OCI-LY7 (cell line): ENCODE measurements at regions of chr1 and their contacts with region 1.

Region 1: DNA sequence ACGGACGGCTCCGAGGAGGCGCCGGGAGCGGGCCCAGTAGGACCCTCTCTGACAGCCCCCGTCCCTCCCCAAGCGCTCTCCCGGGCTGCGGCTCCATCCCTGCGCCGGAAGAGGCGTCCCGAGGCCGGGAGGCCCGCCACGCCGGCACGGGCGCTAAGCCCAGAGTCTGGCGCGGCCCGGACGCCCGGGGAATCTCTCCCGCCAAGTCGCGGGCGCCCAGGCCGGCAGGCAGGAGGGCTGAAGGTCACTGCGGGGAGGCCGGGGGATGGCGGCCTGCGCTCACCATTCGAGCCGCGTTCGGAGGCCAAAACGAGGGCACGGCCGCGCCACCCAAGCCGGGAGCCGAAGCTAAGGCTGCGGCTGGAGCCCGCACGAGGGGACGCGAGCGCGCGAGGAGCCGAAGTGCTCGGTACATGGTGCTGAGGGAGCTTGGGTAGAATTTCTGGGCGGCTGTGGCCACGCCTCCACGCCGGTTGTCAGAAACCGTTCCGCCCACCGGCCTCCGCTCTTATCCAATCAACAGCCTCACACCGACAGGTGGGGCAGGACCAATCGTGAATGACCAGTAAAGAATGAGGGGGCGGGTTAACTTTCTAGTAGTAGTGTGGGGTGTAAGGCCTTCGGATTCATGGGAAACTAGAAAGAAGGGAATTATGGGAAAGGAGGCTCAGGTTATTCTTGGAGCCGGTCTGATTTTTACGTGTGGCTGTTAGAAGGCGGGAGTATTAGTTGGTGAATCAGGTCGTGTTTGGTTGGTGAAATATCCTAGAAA is at the start of gene FH:
- DNase-seq: peak; percentile 96
- H3K4me3 ChIP-seq: peak within 1 kb of the TSS; percentile 88
- H3K27ac ChIP-seq: peak within 1 kb of the TSS; percentile 45
- H3K4me1 ChIP-seq: peaks cover 22% of the 10 kb centered on the region
- CTCF ChIP-seq: no peak
- total RNA-seq, gene FH: 44.0 and 45.5 TPM in 2 replicates

Region 2: DNA sequence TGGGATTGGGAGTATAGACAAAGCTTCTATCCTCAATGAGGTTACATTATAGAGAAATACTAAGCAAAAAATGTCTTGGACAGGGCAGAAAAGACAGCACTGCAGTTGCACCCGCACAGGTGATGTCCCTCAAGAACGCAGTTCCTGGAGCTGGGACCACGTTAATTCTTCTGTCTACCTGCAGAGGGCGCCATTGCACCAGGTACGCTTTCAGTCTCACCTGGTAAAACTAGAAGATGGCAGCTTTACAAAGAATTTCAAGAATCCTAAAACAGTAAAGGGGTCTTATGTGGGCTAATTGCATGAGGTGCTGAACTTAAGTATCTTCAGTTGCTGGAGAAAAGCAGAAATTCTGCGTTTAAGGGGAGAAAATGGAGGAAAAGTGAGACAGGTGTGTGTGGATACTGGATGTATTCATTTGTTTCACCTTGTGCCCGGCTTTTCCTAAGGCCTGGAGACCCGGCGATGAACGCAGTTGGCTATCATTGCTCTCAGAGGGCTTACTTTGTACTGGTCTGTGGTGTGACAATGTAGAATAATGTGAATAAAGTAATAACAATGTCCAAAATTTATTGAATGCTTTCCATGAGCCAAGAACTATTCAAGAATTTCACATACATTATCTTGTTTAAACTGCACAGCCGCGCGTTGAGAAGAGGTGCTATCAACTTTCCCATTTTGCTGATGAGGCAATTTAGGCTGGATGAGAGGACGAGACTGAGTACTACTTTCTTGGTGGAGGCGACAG is 631.3 kb before region 1 on chr1:
- CTCF ChIA-PET with region 1: no interaction called
- POLR2A ChIA-PET with region 1: no interaction called
- intact Hi-C with region 1: no loop called
- DNase-seq: peak; percentile 64
- H3K4me3 ChIP-seq: no peak overlapping the region
- H3K27ac ChIP-seq: no peak overlapping the region
- H3K4me1 ChIP-seq: no peaks in the 10 kb centered on the region
- CTCF ChIP-seq: peak; percentile 99

Region 3: DNA sequence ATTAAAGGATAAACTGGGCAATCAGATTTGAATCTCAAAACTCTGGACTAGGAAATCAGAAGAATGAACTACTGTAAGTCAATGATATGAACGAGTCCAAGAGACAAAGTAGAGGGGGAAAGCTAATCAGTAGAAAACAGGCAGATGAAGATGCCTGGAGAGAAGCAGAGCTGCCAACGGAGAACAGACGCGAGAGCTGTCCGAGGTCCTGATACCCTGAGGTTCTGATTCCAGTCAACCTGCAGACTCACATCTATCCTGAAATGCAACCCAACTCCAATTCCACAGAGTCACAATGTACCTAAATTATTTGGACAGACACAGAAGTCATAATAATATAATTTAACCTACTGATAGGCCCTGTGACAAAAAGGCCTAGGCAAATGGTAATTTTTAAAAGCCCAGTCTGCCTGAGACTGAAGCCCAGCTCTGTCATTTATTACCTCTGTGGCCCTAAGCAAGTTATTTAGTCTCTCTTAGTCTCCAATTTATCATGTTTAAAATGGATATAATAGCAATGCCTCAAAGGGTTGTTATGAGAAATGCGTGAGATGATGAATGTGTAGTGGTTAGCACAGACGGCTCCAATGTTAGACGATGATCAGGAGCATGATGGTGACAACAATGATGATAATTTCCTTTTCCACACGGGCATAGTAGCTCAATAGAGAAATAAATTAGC is 195.8 kb before region 1 on chr1:
- CTCF ChIA-PET with region 1: no interaction called
- POLR2A ChIA-PET with region 1: no interaction called
- intact Hi-C with region 1: no loop called
- DNase-seq: peak; percentile 7
- H3K4me3 ChIP-seq: no peak overlapping the region
- H3K27ac ChIP-seq: no peak overlapping the region
- H3K4me1 ChIP-seq: no peaks in the 10 kb centered on the region
- CTCF ChIP-seq: no peak

Region 4: DNA sequence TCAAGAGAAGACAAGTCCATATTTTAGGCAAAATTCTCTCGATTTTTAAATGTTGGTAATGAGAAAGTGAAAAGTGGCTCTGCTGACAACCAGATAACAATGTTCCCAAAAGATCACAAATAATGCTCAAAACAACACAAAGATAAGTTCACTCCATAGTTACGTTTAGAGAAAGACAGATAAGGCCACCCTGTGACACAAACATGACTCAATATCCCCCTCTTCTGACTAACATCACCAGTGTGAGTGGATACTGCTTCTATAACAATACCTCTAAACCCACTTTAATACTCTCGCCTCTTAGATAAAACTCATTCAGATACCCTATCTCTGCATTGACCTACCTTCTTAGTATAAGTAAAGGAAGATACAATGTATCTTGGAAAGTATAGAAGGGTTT is 111.3 kb before region 1 on chr1:
- CTCF ChIA-PET with region 1: no interaction called
- POLR2A ChIA-PET with region 1: no interaction called
- intact Hi-C with region 1: no loop called
- DNase-seq: peak; percentile 4
- H3K4me3 ChIP-seq: no peak overlapping the region
- H3K27ac ChIP-seq: no peak overlapping the region
- H3K4me1 ChIP-seq: no peaks in the 10 kb centered on the region
- CTCF ChIP-seq: no peak

Region 5: DNA sequence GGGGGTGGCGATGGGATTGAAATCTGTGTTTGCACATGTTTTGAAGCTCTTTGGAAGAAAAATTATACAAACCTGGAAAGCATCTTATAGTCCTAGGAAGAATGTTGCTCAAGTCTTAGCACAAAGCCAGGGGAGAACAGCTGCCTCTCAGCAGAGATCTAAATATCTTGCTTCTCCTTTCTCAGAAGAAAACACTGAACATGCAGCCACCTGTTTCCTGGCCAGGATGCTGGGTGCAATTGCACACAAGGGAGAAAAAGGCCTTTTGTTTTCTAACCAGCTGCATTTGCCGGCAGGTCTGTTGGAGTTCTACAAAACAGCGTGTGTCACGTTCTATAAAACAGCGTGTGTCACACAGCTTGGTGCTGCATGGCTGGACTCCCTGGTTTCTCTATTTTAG is 1264.6 kb after region 1 on chr1:
- CTCF ChIA-PET with region 1: no interaction called
- POLR2A ChIA-PET with region 1: no interaction called
- intact Hi-C with region 1: loop called (anchors 10 kb)
- DNase-seq: peak; percentile 75
- H3K4me3 ChIP-seq: no peak overlapping the region
- H3K27ac ChIP-seq: peak overlapping the region; percentile 38
- H3K4me1 ChIP-seq: peaks cover 11% of the 10 kb centered on the region
- CTCF ChIP-seq: no peak